ENCODE measurements at regions of chr5 and their contacts with region 1.

Region 1: GRCh38 chr5:36739751-36740221 is 133.4 kb downstream of the SLC1A3 start:
- DNase-seq: peak; percentile 82 to 90 (median 83)
- ATAC-seq: peak; percentile 78
- H3K4me3 ChIP-seq: no peak overlapping the region
- H3K27ac ChIP-seq: peak overlapping the region; percentile 66; the same call in 2 of the 3 replicates
- H3K4me1 ChIP-seq: peaks cover 11 to 25% of the 10 kb centered on the region in 2 experiments
- H3K27me3 ChIP-seq: peaks cover 2 to 9% of the 10 kb centered on the region in 2 experiments; a peak in 3 of 5 replicates
- CTCF ChIP-seq: peak; percentile 85 to 96 (median 96)
- EP300 ChIP-seq: peak; percentile 83
- POLR2A ChIP-seq: no peak
- RAD21 ChIP-seq: peak; percentile 91 to 94

Region 2: GRCh38 chr5:36728697-36729543 is 10.9 kb before region 1 on chr5:
- CTCF ChIA-PET with region 1: interaction called, 4 read pairs
- POLR2A ChIA-PET with region 1: interaction called, 13 read pairs
- in situ Hi-C with region 1: no loop called
- intact Hi-C with region 1: no loop called
- DNase-seq: peak; percentile 57 to 79 (median 71)
- ATAC-seq: peak; percentile 83
- H3K4me3 ChIP-seq: no peak overlapping the region
- H3K27ac ChIP-seq: no peak overlapping the region
- H3K4me1 ChIP-seq: no peaks in the 10 kb centered on the region; a peak in 1 of 5 replicates
- H3K27me3 ChIP-seq: peaks cover 8 to 11% of the 10 kb centered on the region in 2 experiments; a peak in 4 of 5 replicates
- CTCF ChIP-seq: peak; percentile 65 to 75 (median 71); a peak in 5 of 6 replicates
- EP300 ChIP-seq: no peak
- POLR2A ChIP-seq: no peak
- RAD21 ChIP-seq: peak; percentile 46 to 73

Region 3: GRCh38 chr5:36875790-36876388 is 136.1 kb after region 1 on chr5:
- CTCF ChIA-PET with region 1: interaction called, 12 read pairs
- POLR2A ChIA-PET with region 1: interaction called, 7 read pairs
- in situ Hi-C with region 1: loop called (anchors 5 kb)
- intact Hi-C with region 1: loop called (anchors 1 kb)
- DNase-seq: peak; percentile 72 to 90 (median 78)
- ATAC-seq: peak; percentile 73
- H3K4me3 ChIP-seq: peak overlapping the region; percentile 93
- H3K27ac ChIP-seq: peak overlapping the region; percentile 93
- H3K4me1 ChIP-seq: peaks cover 9 to 10% of the 10 kb centered on the region in 2 experiments; a peak in 4 of 5 replicates
- H3K27me3 ChIP-seq: no peaks in the 10 kb centered on the region
- CTCF ChIP-seq: peak; percentile 71 to 82 (median 82)
- EP300 ChIP-seq: no peak; the same call in 1 of the 2 replicates
- POLR2A ChIP-seq: 0 out of 2 replicates have a peak, but pooled peaks have one; percentile 20
- RAD21 ChIP-seq: peak; percentile 53 to 64; a peak in 3 of 4 replicates

Region 4: GRCh38 chr5:36897616-36898015 is 157.8 kb after region 1 on chr5:
- CTCF ChIA-PET with region 1: no interaction called
- POLR2A ChIA-PET with region 1: no interaction called
- in situ Hi-C with region 1: no loop called
- intact Hi-C with region 1: no loop called
- DNase-seq: no peak
- ATAC-seq: no peak
- H3K4me3 ChIP-seq: no peak overlapping the region
- H3K27ac ChIP-seq: no peak overlapping the region
- H3K4me1 ChIP-seq: no peaks in the 10 kb centered on the region
- H3K27me3 ChIP-seq: no peaks in the 10 kb centered on the region
- CTCF ChIP-seq: no peak
- EP300 ChIP-seq: no peak
- POLR2A ChIP-seq: no peak
- RAD21 ChIP-seq: no peak

Region 5: GRCh38 chr5:37005946-37006540 is 266.3 kb after region 1 on chr5:
- CTCF ChIA-PET with region 1: interaction called, 13 read pairs
- POLR2A ChIA-PET with region 1: no interaction called
- in situ Hi-C with region 1: no loop called
- intact Hi-C with region 1: loop called (anchors 2 kb)
- DNase-seq: peak; percentile 12 to 18 (median 16)
- ATAC-seq: peak; percentile 77
- H3K4me3 ChIP-seq: no peak overlapping the region
- H3K27ac ChIP-seq: no peak overlapping the region
- H3K4me1 ChIP-seq: no peaks in the 10 kb centered on the region
- H3K27me3 ChIP-seq: no peaks in the 10 kb centered on the region
- CTCF ChIP-seq: peak in 2 of 3 experiments; percentile 19 to 73; a peak in 3 of 6 replicates
- EP300 ChIP-seq: no peak
- POLR2A ChIP-seq: no peak
- RAD21 ChIP-seq: peak; percentile 53 to 62

Region 6: GRCh38 chr5:37214550-37214949 is 474.8 kb after region 1 on chr5:
- CTCF ChIA-PET with region 1: no interaction called
- POLR2A ChIA-PET with region 1: no interaction called
- in situ Hi-C with region 1: no loop called
- intact Hi-C with region 1: loop called (anchors 5 kb)
- DNase-seq: no peak
- ATAC-seq: no peak
- H3K4me3 ChIP-seq: no peak overlapping the region
- H3K27ac ChIP-seq: no peak overlapping the region
- H3K4me1 ChIP-seq: no peaks in the 10 kb centered on the region
- H3K27me3 ChIP-seq: peaks cover 22 to 33% of the 10 kb centered on the region in 2 experiments
- CTCF ChIP-seq: no peak
- EP300 ChIP-seq: no peak
- POLR2A ChIP-seq: no peak
- RAD21 ChIP-seq: no peak

Measured in K562 (cell line).